H1 (cell line): ENCODE measurements at regions of chr1 and their contacts with region 1.

Region 1: DNA sequence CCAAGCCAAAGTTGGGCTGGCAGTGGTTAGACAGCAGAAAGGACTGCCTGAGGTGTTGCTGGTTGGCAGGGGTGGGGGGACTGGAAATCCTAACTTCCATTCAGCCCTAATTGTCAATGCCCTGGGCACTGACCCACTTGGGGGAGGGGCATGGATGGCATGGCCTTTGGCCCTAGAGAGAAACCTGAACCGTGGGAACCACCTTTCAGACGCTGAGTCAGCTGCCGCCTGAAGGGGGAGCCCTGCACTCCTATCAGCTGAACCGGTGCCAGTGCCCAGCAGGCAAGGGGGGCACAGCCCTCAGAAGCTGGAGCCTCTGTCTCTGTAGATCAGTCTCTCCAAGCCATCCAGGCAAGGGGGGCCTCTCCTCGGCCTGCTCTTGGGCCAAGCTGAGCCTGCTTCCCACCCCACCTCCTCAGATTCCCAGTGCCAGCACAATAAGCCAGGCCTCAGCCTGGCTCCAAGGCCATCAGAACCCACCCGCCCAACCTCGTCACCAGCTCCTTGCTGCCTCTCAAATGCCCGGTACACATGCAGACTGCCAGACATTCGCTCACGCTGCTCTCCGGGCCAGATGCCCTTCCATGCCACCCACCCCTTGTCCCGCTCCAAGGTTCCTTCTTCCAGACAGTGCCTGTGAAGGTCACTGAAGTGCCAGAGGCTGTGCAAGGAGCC is 11.5 kb downstream of the TINAGL1 start:
- DNase-seq: peak in 1 of 2 experiments; percentile 91
- H3K4me3 ChIP-seq: peak overlapping the region in 1 of 4 experiments; percentile 62; a peak in 1 of 8 replicates
- H3K27ac ChIP-seq: no peak overlapping the region
- H3K4me1 ChIP-seq: peaks cover 2 to 12% (median 10%) of the 10 kb centered on the region in 4 experiments
- H3K27me3 ChIP-seq: peaks cover 0 to 12% (median 5%) of the 10 kb centered on the region in 4 experiments; a peak in 4 of 7 replicates
- CTCF ChIP-seq: peak; percentile 72 to 94 (median 94)
- EP300 ChIP-seq: no peak
- POLR2A ChIP-seq: peak in 1 of 2 experiments; percentile 42; a peak in 1 of 3 replicates
- RAD21 ChIP-seq: peak; percentile 43 to 59

Region 2: GRCh38 chr1:31572323-31573104 is 15.3 kb before region 1 on chr1:
- CTCF ChIA-PET with region 1: interaction called, 62 read pairs
- POLR2A ChIA-PET with region 1: no interaction called
- DNase-seq: peak in 1 of 2 experiments; percentile 11
- H3K4me3 ChIP-seq: no peak overlapping the region
- H3K27ac ChIP-seq: no peak overlapping the region
- H3K4me1 ChIP-seq: peaks cover 3 to 24% (median 17%) of the 10 kb centered on the region in 4 experiments
- H3K27me3 ChIP-seq: peaks cover 0 to under 1% (median 0%) of the 10 kb centered on the region in 4 experiments; a peak in 2 of 7 replicates
- CTCF ChIP-seq: no peak
- EP300 ChIP-seq: no peak
- POLR2A ChIP-seq: no peak
- RAD21 ChIP-seq: no peak

Region 3: DNA sequence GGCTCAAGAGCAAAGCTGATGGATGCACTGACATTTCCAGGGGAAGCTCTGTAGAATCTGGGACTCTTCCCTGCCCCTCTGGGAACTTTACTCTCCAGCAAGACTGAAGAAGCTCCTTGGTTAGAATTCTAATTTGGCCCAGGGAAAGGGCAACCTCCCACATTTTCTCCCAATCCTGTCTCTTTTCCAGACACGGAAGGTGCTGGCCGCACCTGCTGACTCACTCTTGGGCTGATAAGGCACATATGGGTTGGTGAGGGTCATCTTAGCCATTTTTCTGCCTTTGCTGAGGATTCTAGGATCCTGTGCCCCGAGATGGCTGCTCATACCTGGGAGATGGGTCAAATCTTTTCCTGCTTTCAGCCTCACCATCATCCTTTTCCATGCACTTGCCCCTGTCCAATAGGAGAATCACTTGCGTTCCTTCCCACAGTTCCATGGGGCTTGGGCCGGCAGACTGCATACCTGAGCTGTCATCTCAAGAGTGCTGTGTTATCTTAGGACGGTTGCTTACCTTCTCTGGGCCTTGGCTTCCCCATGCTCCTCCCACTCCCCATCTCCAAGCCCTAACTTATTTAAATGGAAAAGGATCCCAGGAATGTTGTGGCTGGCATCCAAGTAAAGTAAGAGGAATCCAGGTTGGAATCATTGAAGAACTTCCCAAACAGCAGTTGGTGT is 10.2 kb before region 1 on chr1:
- CTCF ChIA-PET with region 1: interaction called, 19 read pairs
- POLR2A ChIA-PET with region 1: interaction called, 3 read pairs
- DNase-seq: peak in 1 of 2 experiments; percentile 42
- H3K4me3 ChIP-seq: no peak overlapping the region
- H3K27ac ChIP-seq: no peak overlapping the region
- H3K4me1 ChIP-seq: peaks cover 10 to 49% (median 30%) of the 10 kb centered on the region in 4 experiments
- H3K27me3 ChIP-seq: peaks cover 0 to 2% (median 0%) of the 10 kb centered on the region in 4 experiments; a peak in 1 of 7 replicates
- CTCF ChIP-seq: no peak
- EP300 ChIP-seq: no peak
- POLR2A ChIP-seq: no peak
- RAD21 ChIP-seq: no peak

Region 4: GRCh38 chr1:31651089-31651420 is 63.2 kb after region 1 on chr1:
- CTCF ChIA-PET with region 1: no interaction called
- POLR2A ChIA-PET with region 1: no interaction called
- DNase-seq: no peak
- H3K4me3 ChIP-seq: no peak overlapping the region
- H3K27ac ChIP-seq: no peak overlapping the region
- H3K4me1 ChIP-seq: no peaks in the 10 kb centered on the region
- H3K27me3 ChIP-seq: no peaks in the 10 kb centered on the region
- CTCF ChIP-seq: no peak
- EP300 ChIP-seq: no peak
- POLR2A ChIP-seq: no peak
- RAD21 ChIP-seq: no peak